ENCODE measurements at regions of chr11 and their contacts with region 1.

Region 1: GRCh38 chr11:34357701-34358257 is at the start of gene ABTB2:
- ATAC-seq: peak; percentile 73 to 85 (median 80)
- H3K4me3 ChIP-seq: peak within 1 kb of the TSS; percentile 35 to 54 (median 51)
- H3K27ac ChIP-seq: peak within 1 kb of the TSS in 1 of 2 donors; percentile 51
- H3K4me1 ChIP-seq: peaks cover 23 to 28% of the 10 kb centered on the region in 2 donors
- total RNA-seq, gene ABTB2: 3.0 to 5.0 (median 3.7) TPM

Region 2: GRCh38 chr11:33857933-33858371 is 499.8 kb before region 1 on chr11:
- in situ Hi-C with region 1: loop called in 5 of 9 experiments (anchors 25 kb)
- ATAC-seq: peak; percentile 86 to 98 (median 94)
- H3K4me3 ChIP-seq: no peak overlapping the region
- H3K27ac ChIP-seq: no peak overlapping the region
- H3K4me1 ChIP-seq: peaks cover 0 to 16% of the 10 kb centered on the region in 2 donors

Region 3: GRCh38 chr11:33996498-33997454 is 361.0 kb before region 1 on chr11:
- in situ Hi-C with region 1: loop called in 2 of 9 experiments (anchors 25 kb)
- ATAC-seq: peak; percentile 78 to 97 (median 91)
- H3K4me3 ChIP-seq: no peak overlapping the region
- H3K27ac ChIP-seq: no peak overlapping the region
- H3K4me1 ChIP-seq: no peaks in the 10 kb centered on the region

Region 4: GRCh38 chr11:34174412-34175041 is 183.3 kb before region 1 on chr11:
- in situ Hi-C with region 1: loop called in 8 of 9 experiments (anchors 10 to 25 kb)
- ATAC-seq: peak; percentile 97 to 100 (median 98)
- H3K4me3 ChIP-seq: peak overlapping the region; percentile 13 to 25 (median 21)
- H3K27ac ChIP-seq: no peak overlapping the region
- H3K4me1 ChIP-seq: peaks cover 3 to 4% of the 10 kb centered on the region in 2 donors

Region 5: DNA sequence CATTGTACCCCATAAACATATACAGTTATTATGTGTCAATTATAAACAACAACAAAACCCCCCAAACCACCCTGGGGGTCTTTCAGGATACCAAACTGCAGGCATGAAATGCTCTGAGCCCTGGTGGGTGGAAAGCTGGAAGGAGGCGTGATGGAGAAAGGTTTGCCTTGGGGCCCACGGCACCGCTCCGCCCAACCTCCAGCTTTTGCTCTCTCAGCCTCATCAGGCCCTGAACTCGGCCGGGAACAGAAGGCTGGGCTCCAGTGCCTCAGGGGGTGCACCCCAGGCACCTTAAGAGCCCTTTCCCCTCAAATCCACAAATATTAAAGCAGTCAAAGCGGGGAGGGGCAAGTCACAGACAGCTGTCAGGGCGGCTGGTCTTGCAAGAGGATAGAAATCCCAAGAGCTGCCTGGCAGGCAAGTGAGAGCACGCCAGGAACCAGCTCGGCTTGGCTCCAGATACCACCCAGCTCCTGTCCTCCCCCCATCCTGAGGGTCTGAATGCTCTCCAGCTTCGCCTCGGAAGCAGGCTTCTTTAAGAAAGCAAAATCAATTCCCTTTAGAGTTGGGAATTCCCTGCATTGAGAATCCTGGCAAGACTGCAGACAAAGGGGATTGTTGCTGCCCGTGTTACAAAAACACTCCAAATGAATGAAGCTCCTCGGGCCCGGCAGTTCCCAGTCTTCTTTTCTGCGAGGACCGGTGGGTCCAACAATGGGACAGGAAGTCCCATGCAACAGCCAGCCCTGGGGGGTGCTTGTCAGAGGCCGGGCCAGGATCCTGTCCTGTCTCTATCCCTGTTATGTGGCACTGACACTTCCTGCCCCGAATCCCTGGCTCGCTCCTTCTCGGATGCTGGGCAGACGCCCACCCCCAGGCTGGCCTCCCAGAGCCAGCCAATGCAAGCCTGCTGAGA is 171.6 kb before region 1 on chr11:
- in situ Hi-C with region 1: loop called in 1 of 9 experiments (anchors 10 kb)
- ATAC-seq: peak in 5 of 8 experiments; percentile 52 to 76 (median 65)
- H3K4me3 ChIP-seq: no peak overlapping the region
- H3K27ac ChIP-seq: peak overlapping the region in 1 of 2 donors; percentile 39
- H3K4me1 ChIP-seq: peaks cover 21 to 31% of the 10 kb centered on the region in 2 donors

Region 6: DNA sequence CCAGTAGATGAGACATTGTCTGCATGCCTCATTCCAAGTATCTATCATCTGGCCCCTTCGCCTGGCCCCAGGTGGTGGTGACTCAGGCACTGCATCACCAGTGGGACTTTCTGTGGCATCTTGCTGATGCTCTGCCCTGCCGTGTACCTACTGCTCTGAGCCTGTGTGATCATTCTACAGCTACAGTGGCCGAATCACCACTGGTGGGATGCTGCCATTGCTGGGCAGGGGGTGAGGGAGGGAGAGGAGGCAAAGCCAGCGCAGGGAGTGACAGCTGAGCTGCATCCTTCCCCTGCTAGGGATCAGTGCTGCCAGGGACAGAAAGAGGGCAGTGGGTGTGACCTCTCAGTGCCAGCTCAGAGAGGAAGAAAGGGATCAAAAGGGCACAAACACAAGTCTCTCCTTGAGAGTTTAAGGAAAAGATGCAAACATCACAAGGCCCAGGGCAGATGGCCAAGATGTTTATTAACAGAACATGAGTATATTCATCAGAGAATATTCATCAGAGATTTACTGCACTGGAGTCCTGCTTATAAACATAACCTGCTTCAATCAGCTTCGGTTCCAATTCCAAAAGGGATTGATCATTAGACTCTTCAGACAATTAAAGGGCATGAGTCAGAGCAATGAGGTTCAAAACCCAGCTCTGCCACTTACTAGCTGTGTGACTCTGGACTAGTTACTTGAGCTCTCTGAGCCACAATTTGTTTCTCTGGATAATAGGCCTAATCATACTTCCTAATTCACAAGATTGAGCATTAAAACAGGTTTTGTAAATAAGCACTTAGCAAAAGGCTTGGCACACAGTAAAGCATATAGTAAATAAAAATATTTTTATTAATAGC is 142.6 kb before region 1 on chr11:
- in situ Hi-C with region 1: no loop called
- ATAC-seq: peak; percentile 48 to 96 (median 76)
- H3K4me3 ChIP-seq: no peak overlapping the region
- H3K27ac ChIP-seq: no peak overlapping the region
- H3K4me1 ChIP-seq: peaks cover 4 to 12% of the 10 kb centered on the region in 2 donors

Region 7: DNA sequence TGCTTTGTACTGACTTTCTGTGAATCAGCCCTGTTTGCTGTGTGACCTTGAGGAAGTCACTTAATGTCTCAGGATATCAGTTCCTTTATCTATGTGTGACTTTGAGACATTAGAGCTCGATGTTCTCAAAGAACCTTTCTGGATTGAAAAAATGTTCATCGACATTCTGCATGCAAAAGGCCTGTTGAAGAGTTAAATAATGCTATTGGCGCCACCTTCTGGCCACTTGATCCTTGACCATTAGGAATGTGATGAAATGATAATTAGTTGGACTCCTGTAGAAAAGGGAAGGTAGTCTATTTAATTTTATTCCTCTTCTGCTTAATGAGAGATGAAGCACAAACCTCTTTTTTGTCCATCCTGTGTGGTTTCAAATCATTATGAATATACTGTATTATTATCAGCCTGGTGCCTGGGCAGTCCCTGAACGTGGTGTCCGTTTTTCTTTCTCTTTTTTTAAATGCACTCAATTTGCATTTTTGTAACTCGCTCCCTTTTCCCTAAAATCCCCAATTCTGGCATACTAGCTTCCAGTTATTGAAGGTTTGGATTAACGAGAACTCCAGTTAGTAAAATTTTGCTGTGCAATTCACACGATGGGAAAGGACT is 135.1 kb after region 1 on chr11:
- in situ Hi-C with region 1: loop called in 3 of 9 experiments (anchors 10 to 25 kb)
- ATAC-seq: peak in 5 of 8 experiments; percentile 44 to 72 (median 66)
- H3K4me3 ChIP-seq: no peak overlapping the region
- H3K27ac ChIP-seq: no peak overlapping the region
- H3K4me1 ChIP-seq: no peaks in the 10 kb centered on the region